Colonic mucosa (tissue), 4 donors: ENCODE measurements at regions of chr4 and their contacts with region 1.

Region 1: GRCh38 chr4:55435141-55435841 is 39.5 kb downstream of the TMEM165 start:
- DNase-seq: no peak
- H3K4me3 ChIP-seq: no peak overlapping the region
- H3K27ac ChIP-seq: no peak overlapping the region
- H3K4me1 ChIP-seq: no peaks in the 10 kb centered on the region
- H3K27me3 ChIP-seq: no peaks in the 10 kb centered on the region
- CTCF ChIP-seq: no peak

Region 2: GRCh38 chr4:55184600-55185523 is 250.4 kb before region 1 on chr4:
- intact Hi-C with region 1: no loop called
- DNase-seq: peak; percentile 66
- H3K4me3 ChIP-seq: no peak overlapping the region
- H3K27ac ChIP-seq: no peak overlapping the region
- H3K4me1 ChIP-seq: no peaks in the 10 kb centered on the region
- H3K27me3 ChIP-seq: no peaks in the 10 kb centered on the region
- CTCF ChIP-seq: peak; percentile 31

Region 3: DNA sequence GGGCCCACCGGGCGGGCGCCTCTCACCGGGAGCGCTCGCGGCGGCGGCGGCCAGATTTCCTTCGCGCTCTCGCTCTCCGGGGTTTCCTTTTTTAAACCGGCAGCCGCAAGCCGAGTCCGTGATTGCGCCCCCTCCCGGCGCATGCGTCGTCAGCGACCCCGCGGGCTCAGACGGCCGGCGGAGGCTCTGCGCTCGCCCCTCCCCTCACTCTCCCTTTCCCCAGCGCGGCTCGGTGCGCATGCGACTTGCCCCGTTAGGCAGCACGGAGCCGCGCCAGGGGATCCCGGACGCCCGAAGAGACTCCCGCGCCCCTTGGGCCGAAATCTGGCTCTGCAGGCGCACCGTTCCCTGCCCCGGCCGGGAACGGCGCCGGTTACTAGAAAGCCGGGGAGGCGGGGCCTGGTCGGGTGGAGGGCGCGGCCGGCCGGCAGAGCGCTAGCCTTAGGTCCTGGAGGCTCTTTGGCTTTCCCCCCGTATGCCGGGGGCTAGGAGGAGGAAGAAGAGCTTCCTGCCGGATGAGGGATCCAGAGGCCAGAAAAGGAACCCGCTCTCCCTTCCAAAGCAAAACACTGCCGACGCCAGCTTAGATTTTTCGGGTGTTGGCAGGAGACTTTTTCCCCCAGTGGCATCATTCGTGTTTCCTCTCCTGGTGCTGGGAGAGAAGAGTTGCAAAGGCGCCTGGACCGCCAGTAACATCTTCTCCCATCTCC is 111.6 kb after region 1 on chr4 and contains the start of gene CLOCK:
- intact Hi-C with region 1: loop called (anchors 10 kb)
- DNase-seq: peak; percentile 83
- H3K4me3 ChIP-seq: peak within 1 kb of the TSS; percentile 94
- H3K27ac ChIP-seq: peak within 1 kb of the TSS; percentile 99
- H3K4me1 ChIP-seq: no peaks in the 10 kb centered on the region
- H3K27me3 ChIP-seq: no peaks in the 10 kb centered on the region
- CTCF ChIP-seq: peak; percentile 43
- total RNA-seq, gene CLOCK: 18.4 to 20.8 TPM